Left colon (tissue), 2 donors: ENCODE measurements at regions of chr15 and their contacts with region 1.

Region 1: DNA sequence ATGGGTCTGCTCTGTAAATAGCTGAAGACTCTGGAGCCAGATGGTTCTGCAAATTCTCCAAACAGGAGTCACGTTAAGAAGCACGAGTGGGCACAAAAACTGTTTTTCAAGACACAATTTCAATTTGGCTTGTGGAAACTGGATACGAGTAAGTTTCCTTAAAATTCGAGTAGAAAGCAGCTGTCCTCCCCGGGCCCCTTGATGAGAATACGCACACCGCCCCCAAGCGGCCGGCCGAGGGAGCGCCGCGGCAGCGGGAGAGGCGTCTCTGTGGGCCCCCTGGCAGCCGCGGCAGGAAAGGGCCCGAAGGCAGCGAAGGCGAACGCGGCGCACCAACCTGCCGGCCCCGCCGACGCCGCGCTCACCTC is 778 bp upstream of the THBS1 start:
- DNase-seq: peak; percentile 88 to 95
- ATAC-seq: peak; percentile 66

Region 2: DNA sequence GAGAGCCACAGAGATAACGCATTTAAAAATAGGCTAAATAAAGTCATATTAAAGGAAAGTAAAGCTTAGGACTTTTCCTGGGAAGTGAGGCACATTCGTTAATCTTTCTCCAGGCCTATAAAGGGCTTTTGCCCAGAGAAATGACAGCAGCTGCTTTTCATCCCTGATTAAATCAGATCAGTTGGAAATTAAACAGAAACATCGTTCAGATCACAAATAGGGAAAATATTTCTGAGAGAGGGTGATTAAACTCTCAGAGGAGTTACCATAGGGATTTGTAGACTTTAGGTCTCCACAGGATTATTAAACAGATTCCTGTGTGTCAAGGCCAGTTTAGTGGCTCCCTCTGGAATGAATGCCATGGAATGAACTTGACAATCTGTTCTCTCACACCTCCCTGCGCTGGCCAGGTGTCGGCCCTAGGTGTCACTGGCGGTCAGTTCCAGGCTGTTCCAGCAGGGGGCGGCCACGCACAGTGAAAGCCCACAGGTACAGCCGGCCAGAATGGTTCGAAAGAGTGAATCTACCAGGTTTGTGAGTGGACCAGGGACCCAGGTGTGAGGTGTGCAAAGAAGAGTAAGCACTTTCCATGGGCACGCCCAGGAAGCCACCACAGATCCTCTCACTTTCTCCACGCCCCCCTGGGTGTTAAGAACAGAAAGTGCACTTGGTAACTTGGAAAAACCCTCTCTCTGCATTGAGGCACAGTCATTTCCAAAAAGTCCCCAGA is 762.5 kb before region 1 on chr15:
- intact Hi-C with region 1: loop called in 1 of 2 experiments (anchors 5 kb)
- DNase-seq: peak; percentile 63 to 91
- ATAC-seq: peak; percentile 100

Region 3: DNA sequence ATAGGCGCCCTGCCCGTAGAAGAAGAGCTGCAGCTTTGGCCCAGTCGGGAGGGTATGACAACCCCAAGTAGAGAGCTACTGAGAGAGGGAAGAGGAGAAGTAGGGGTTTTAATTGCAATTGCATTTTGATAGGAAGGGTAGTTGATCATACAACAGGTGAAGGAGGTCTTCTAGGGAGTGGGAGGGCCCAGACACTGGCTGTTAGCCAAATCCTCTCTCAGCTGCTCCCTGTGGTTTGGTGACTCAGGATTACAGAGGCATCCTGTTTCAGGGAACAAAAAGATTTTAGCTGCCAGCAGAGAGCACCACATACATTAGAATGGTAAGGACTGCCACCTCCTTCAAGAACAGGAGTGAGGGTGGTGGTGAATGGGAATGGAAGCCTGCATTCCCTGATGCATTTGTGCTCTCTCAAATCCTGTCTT is 408.1 kb before region 1 on chr15:
- intact Hi-C with region 1: loop called in 1 of 2 experiments (anchors 5 kb)
- DNase-seq: peak; percentile 36 to 40
- ATAC-seq: peak; percentile 95

Region 4: DNA sequence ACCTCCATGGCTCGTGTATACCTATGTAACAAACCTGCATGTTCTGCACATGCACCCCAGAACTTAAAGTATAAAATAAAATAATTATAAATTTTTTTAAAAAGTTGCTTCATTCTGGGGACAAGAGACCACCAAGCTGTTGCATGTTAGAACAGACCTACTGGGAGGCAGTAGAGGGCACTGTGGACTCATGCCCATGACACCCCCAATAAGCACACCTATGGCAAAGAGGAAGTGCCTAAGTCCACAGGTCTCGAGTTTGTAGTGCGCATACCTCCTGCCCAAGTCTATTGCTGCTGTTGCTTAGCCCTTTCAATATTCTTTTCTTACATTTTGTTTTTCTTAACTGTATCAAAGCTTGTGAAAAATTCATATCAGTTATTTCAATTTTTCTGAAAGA is 267.1 kb before region 1 on chr15:
- intact Hi-C with region 1: loop called in 1 of 2 experiments (anchors 10 kb)
- DNase-seq: peak; percentile 49 to 70
- ATAC-seq: peak; percentile 100

Region 5: DNA sequence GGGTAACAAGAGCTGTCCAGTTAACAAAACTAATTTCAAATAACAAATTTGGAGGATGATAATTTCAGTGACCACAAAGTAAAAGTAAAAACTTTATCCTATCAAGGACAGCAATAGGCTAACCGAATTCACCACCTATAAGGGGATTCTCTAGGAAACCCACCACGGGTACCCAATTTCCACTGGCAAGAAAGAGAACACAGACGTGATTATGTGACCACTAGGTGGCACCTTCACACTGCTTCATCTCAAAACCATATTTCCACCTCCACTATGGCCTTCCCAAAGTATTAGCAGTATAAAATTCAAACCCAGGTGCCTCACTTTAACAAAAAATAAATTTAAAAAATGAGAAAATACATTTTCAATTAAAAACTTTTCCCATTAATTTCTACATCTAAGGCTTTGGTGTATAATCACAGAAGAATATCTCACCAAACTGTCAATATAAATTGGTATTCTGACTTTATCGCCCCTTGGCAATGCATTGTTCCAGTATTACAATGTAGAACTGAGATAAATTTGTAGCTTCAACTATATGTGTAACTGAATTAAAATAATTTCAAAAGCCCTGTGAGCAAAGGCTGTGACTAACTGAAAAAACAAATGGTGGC is 106.0 kb after region 1 on chr15:
- intact Hi-C with region 1: no loop called
- DNase-seq: peak in 1 of 2 donors; percentile 39
- ATAC-seq: peak; percentile 86